ENCODE measurements at regions of chr7 and their contacts with region 1.

Region 1: GRCh38 chr7:26365077-26365900 is 73.6 kb downstream of the SNX10 start:
- DNase-seq: peak; percentile 46
- H3K4me3 Mint-ChIP-seq: no peak overlapping the region
- H3K27ac Mint-ChIP-seq: peak overlapping the region; percentile 37
- H3K4me1 Mint-ChIP-seq: peaks cover 14% of the 10 kb centered on the region
- H3K27me3 Mint-ChIP-seq: no peaks in the 10 kb centered on the region

Region 2: DNA sequence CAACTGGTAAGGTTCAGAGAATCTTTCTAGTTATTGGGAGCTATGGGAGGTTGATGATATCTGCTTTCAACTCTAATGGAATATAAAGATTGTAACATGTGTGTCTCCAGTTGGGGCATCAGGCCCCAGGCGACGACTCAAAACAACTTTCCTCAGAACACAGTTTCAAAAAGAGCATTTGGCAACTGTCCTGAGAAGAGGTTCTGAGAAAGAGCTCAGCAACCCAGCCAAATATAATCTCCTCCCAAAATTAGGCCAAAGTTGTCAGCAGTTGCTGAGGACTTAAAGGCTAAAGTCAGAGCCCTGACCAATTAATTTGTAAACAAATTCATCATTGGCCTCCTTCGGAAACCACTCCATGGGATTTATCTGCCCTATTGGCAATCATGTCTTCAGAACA is 464.4 kb before region 1 on chr7:
- intact Hi-C with region 1: no loop called
- DNase-seq: no peak
- H3K4me3 Mint-ChIP-seq: no peak overlapping the region
- H3K27ac Mint-ChIP-seq: no peak overlapping the region
- H3K4me1 Mint-ChIP-seq: peaks cover 5% of the 10 kb centered on the region
- H3K27me3 Mint-ChIP-seq: no peaks in the 10 kb centered on the region

Region 3: GRCh38 chr7:26078437-26079336 is 286.6 kb before region 1 on chr7:
- intact Hi-C with region 1: loop called (anchors 5 kb)
- DNase-seq: peak; percentile 66
- H3K4me3 Mint-ChIP-seq: no peak overlapping the region
- H3K27ac Mint-ChIP-seq: no peak overlapping the region
- H3K4me1 Mint-ChIP-seq: peaks cover 9% of the 10 kb centered on the region
- H3K27me3 Mint-ChIP-seq: peaks cover 76% of the 10 kb centered on the region

Region 4: DNA sequence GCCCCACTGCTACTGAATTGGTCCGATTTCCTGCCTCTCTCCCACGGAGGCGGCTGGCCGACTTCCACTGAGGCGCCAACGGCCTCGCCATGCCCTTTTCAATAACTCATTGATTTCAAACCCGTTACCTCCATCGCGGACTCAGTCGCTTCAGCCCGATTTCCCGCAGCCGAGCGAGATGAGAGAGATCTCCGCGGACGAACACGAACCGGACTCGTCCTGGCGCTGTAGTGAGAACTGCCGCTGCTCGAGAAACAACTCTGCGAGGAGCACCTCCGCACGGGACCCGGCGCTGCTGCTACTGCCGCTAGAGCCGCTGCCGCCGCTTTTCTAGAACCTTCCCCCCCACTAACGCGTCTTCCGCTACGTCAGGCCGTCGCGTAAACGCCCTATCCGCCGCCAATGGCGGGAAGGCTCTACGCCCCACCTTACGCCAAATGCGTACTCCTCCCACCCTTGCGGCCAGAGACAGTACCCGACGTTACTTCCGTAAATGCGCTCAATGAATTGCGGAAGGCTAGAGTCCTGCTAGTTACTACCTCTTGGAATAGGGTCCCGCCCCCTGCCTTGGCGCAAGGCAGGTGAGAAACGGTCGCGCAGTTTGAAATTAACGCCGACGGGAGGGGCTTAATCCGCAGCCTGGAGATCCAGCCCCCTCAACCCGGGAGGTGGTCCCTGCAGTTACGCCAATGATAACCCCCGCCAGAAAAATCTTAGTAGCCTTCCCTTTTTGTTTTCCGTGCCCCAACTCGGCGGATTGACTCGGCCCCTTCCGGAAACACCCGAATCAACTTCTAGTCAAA is 164.6 kb before region 1 on chr7 and contains the start of gene HNRNPA2B1:
- intact Hi-C with region 1: loop called (anchors 1 kb)
- DNase-seq: peak; percentile 97
- H3K4me3 Mint-ChIP-seq: peak within 1 kb of the TSS; percentile 100
- H3K27ac Mint-ChIP-seq: peak within 1 kb of the TSS; percentile 100
- H3K4me1 Mint-ChIP-seq: peaks cover 47% of the 10 kb centered on the region
- H3K27me3 Mint-ChIP-seq: no peaks in the 10 kb centered on the region
- total RNA-seq, gene HNRNPA2B1: 821 and 823 TPM in 2 replicates

Region 5: DNA sequence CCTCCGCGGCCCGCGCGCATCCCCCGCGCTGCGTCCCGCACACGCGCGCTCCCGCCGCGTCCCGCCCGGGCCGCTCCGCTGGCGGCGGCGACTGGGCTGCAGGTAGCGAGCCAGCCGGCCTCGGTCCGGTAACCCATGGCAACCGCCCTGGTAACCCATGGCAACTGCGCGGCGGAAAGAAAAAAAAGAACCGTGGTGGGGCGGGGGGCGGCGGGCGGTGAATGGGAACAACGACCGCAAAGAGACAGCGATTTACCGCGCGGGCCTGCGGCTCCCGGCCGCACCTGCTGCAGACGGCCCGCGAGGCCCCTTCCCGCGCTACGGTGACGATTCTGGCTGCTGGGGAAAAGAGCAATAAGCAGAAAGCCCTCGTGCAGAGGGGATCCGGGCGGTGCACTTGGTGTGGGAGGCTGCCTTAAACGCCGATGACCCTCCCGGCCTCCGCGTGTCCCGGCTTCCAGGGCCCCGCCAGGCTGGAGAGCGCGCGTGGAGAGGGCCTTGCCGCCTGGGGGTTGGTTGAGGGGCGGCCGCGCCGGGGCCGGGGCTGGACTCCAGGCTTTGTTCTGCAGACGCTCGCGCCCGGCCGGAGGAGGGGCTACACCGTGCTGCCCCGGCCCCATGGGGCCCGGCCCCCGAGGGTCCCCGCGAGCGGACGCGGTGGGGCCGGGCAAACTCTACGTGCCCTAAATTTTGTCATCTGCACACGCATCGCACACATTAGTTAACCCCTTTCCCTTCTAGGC is 11.1 kb after region 1 on chr7:
- intact Hi-C with region 1: loop called (anchors 1 kb)
- DNase-seq: peak; percentile 20
- H3K4me3 Mint-ChIP-seq: peak overlapping the region; percentile 79
- H3K27ac Mint-ChIP-seq: peak overlapping the region; percentile 79
- H3K4me1 Mint-ChIP-seq: peaks cover 7% of the 10 kb centered on the region
- H3K27me3 Mint-ChIP-seq: peaks cover 30% of the 10 kb centered on the region

Region 6: DNA sequence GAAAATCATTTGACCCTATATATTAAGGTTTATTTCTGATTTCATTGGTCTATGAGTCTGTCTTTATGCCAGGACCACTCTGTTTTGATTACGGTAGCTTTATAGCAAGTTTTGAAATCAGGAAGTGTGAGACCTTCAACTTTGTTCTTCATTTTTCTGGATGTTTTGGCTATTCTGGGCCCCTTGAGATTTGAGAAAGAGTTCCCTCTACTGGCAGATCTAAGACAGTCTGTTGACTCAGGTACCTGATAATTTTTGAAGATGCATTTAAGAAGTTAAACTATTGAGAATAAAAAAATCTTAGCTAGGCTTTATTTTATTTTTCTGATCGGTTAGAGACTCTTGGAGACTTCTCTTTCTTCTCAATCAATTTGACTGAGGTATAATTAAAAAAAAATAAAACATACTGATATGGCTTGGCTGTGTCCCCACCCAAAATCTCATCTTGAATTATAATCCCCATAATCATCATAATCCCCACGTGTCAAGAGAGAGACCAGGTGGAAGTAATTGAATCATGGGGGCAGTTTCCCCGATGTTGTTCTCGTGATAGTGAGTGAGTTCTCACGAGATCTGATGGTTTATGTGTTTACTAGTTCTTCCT is 135.6 kb after region 1 on chr7:
- intact Hi-C with region 1: loop called (anchors 2 kb)
- DNase-seq: no peak
- H3K4me3 Mint-ChIP-seq: no peak overlapping the region
- H3K27ac Mint-ChIP-seq: no peak overlapping the region
- H3K4me1 Mint-ChIP-seq: no peaks in the 10 kb centered on the region
- H3K27me3 Mint-ChIP-seq: peaks cover 13% of the 10 kb centered on the region

Region 7: DNA sequence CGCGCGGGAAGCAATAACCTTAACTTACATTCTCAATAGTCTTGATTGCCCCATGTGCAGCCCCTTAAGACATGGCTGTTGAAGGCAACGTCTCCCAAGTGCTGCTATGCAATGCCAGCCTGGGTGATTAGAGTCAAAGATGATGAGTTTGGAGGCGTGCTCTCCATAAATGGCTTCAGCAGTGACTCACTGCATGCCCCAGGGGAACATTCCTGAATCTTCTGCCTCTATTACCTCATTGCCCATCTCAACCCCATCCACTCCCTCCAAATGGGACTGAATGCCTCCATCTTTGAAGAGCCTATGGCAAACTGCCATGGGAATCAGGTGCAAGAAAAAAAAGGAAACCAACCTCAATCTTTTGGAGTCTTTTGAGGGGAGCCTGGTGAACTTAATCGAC is 209.2 kb after region 1 on chr7:
- intact Hi-C with region 1: no loop called
- DNase-seq: no peak
- H3K4me3 Mint-ChIP-seq: no peak overlapping the region
- H3K27ac Mint-ChIP-seq: no peak overlapping the region
- H3K4me1 Mint-ChIP-seq: no peaks in the 10 kb centered on the region
- H3K27me3 Mint-ChIP-seq: peaks cover 14% of the 10 kb centered on the region

Region 8: DNA sequence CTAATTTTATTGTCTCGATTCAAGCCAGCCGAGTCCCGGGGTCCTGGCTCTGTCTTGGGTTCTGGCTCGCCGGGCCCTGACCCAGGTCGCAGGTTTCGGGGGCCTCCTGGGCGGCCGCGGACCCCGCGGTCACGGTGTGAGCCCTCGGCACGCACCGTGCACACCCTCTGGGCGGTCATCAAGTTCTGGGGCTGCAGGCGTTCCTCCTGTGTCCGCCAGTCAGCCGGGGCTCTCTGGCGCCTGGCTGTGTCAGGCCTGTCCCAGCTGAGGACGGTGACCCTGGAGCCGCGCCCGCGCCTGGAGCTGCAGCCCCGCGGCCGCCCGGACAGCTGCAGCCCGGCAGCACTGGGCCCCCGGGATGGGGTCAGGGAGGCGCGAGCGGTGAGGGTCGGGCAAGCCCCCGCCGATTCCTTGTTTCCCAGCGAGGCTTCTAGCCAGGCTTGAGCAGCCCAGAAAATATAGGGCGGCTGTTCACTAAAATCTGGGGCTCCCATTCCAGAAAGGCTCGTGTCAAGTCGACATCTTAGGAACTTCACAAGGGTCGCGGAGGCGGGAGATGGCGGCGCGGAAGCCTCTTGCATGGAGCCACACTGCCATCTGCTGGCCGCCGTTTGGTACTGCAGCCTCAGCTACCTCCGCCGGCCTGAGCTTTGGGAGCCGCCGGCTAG is 795.4 kb after region 1 on chr7:
- intact Hi-C with region 1: loop called (anchors 1 kb)
- DNase-seq: peak; percentile 63
- H3K4me3 Mint-ChIP-seq: peak overlapping the region; percentile 37
- H3K27ac Mint-ChIP-seq: no peak overlapping the region
- H3K4me1 Mint-ChIP-seq: peaks cover 11% of the 10 kb centered on the region
- H3K27me3 Mint-ChIP-seq: peaks cover 77% of the 10 kb centered on the region

Measured in activated T-helper 1 cell treated with anti-CD3 and anti-CD28 coated beads, Interleukin-12 subunit alpha, Interleukin-12 subunit beta, Interleukin-2, Interleukin-4 antibody, amounts not matched to agents 30 ng/mL and 10 ng/mL and 1 ng/mL, durations not matched to agents 14 hours and 24 hours and 36 hours (primary cell).